Activated CD4-positive, alpha-beta T cell treated with anti-CD3 and anti-CD28 coated beads, Interleukin-2, amount 10 ng/mL, durations not matched to agents 7 days and 5 days (primary cell): ENCODE measurements at regions of chr1 and their contacts with region 1.

Region 1: GRCh38 chr1:28581536-28582247 is 10.4 kb upstream of the RAB42 start:
- DNase-seq: peak; percentile 94
- H3K4me3 Mint-ChIP-seq: peak overlapping the region; percentile 84
- H3K27ac Mint-ChIP-seq: peak overlapping the region; percentile 93
- H3K4me1 Mint-ChIP-seq: peaks cover 35% of the 10 kb centered on the region
- H3K27me3 Mint-ChIP-seq: no peaks in the 10 kb centered on the region

Region 2: GRCh38 chr1:28552758-28553663 is 28.7 kb before region 1 on chr1 and contains the start of gene TRNAU1AP:
- CTCF ChIA-PET with region 1: interaction called, 8 read pairs
- POLR2A ChIA-PET with region 1: interaction called, 22 read pairs
- DNase-seq: peak; percentile 98
- H3K4me3 Mint-ChIP-seq: peak within 1 kb of the TSS; percentile 94
- H3K27ac Mint-ChIP-seq: peak within 1 kb of the TSS; percentile 97
- H3K4me1 Mint-ChIP-seq: peaks cover 29% of the 10 kb centered on the region
- H3K27me3 Mint-ChIP-seq: no peaks in the 10 kb centered on the region
- total RNA-seq, gene TRNAU1AP: 69.3 to 70.6 TPM

Region 3: DNA sequence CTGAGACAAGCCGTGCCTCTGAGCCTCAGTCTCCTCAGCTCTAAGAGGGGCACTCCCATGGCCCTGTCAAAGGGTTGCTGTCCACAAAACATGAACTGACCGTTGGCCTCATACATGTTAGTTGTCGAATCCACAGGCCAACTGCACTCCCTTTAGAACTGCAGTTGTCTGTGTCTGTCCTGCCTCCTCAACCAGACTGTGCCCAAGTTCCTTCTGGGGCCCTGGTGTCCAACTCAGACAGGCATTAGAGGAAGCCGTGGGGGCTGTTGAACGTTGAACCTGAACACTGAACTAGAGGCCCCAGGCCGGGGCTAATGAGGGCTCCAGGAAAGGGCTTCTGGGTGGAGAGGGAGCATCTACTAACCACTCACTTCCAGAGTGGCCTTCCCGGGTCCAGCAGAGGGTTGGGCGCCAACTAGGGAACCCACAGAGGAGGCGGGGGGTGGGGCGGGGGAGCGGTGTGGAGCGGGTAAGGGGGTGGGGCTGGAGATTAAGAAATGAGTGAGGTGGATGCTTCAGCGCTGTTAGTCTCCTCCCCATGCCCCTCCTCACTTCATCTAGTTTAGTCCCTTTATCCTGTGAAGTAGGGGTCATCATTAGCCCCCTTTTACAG is 10.1 kb after region 1 on chr1 and contains the start of gene RAB42:
- CTCF ChIA-PET with region 1: interaction called, 12 read pairs
- POLR2A ChIA-PET with region 1: interaction called, 4 read pairs
- DNase-seq: no peak
- H3K4me3 Mint-ChIP-seq: peak within 1 kb of the TSS; percentile 72
- H3K27ac Mint-ChIP-seq: peak within 1 kb of the TSS; percentile 62
- H3K4me1 Mint-ChIP-seq: peaks cover 8% of the 10 kb centered on the region
- H3K27me3 Mint-ChIP-seq: peaks cover 6% of the 10 kb centered on the region
- total RNA-seq, gene RAB42: not detected

Region 4: GRCh38 chr1:28642847-28643635 is 61.3 kb after region 1 on chr1 and contains the start of gene TAF12:
- CTCF ChIA-PET with region 1: no interaction called
- POLR2A ChIA-PET with region 1: interaction called, 13 read pairs
- DNase-seq: peak; percentile 93
- H3K4me3 Mint-ChIP-seq: peak within 1 kb of the TSS; percentile 93
- H3K27ac Mint-ChIP-seq: peak within 1 kb of the TSS; percentile 98
- H3K4me1 Mint-ChIP-seq: peaks cover 46% of the 10 kb centered on the region
- H3K27me3 Mint-ChIP-seq: no peaks in the 10 kb centered on the region
- total RNA-seq, gene TAF12: 31.0 to 40.4 TPM

Region 5: DNA sequence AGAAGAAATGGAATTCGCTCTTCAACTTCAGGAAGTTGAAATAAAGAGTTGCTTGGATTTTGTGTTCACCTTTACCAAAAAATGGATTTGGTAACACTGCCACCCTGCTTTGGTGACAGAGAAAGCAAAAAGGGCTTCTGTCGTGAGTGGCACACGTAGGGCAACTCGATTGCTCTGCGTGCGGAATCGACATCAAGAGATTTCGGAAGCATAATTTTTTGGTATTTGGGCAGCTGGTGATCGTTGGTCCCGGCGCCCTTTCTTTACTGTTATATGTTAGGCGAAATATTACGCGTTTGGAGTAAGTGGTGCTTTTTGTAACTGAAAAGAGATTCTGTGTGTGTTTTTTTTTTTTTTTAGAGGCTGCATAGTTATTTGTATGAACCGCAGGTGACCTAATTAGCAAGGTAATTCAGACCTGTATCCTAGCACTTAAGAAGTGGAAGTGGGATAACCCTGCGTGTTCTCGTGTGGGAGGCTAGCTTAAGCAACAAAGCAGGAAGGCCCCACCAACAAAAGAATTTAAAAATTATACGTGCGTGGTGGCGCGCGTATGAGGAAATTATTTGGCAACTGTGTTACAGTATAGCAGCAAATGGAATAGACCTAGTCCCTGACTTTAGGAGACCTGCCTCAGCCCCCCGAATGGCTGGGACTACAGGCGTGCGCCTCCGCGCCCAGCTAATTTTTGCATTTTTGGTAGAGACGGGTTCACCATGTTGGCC is 66.9 kb after region 1 on chr1 and contains the start of gene RNU11:
- CTCF ChIA-PET with region 1: interaction called, 3 read pairs
- POLR2A ChIA-PET with region 1: interaction called, 10 read pairs
- DNase-seq: peak; percentile 92
- H3K4me3 Mint-ChIP-seq: peak within 1 kb of the TSS; percentile 77
- H3K27ac Mint-ChIP-seq: peak within 1 kb of the TSS; percentile 97
- H3K4me1 Mint-ChIP-seq: peaks cover 34% of the 10 kb centered on the region
- H3K27me3 Mint-ChIP-seq: no peaks in the 10 kb centered on the region
- total RNA-seq, gene RNU11: not detected

Region 6: GRCh38 chr1:28703629-28704028 is 121.9 kb after region 1 on chr1:
- CTCF ChIA-PET with region 1: no interaction called
- POLR2A ChIA-PET with region 1: no interaction called
- DNase-seq: no peak
- H3K4me3 Mint-ChIP-seq: no peak overlapping the region
- H3K27ac Mint-ChIP-seq: no peak overlapping the region
- H3K4me1 Mint-ChIP-seq: peaks cover 16% of the 10 kb centered on the region
- H3K27me3 Mint-ChIP-seq: no peaks in the 10 kb centered on the region